Transverse colon (tissue), 4 donors: ENCODE measurements at regions of chr20 and their contacts with region 1.

Region 1: DNA sequence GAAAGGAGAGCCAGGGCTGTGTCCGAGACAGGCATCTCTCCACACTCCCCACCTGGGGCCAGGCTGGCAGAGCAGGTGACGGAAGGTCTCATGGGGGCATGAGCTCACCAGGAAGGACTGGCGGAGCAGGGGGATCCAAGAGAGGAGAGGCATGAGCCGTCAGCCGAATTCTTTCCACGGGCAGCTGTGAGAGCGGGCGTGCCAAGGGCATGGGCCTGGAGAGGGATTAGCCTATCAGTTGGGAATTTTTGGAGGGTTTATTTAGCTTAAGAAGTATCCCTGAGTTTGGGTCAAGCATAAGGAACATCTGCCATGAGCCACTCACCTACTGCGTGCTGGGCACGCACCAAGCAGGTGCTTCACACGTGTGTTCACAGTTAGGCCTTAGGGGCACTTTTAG is 60.2 kb upstream of the ZNFX1 start:
- DNase-seq: no peak
- H3K4me3 ChIP-seq: no peak overlapping the region
- H3K27ac ChIP-seq: no peak overlapping the region
- H3K4me1 ChIP-seq: no peaks in the 10 kb centered on the region
- H3K27me3 ChIP-seq: no peaks in the 10 kb centered on the region
- CTCF ChIP-seq: no peak
- EP300 ChIP-seq: no peak
- POLR2A ChIP-seq: no peak

Region 2: DNA sequence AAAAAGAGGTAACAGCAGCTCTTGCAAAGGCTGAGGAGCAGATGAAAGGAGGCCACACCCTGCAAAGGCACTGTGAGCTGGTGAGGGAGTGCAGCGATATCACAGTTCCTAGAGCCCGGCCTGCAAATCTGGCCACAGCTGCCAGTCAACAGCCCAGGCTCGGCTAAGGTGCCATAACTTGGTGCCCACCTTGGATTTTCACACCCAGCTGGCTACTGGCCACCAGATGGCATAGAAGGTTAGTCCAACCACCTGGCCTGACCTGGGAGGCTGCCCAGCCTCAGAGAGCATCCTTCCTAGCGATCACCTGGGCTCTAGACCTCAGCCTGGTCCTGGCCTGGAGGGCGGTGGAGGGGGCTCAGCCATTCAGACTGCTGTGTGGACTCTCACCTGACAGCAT is 97.6 kb after region 1 on chr20:
- in situ Hi-C with region 1: no loop called
- intact Hi-C with region 1: no loop called
- DNase-seq: no peak
- H3K4me3 ChIP-seq: no peak overlapping the region
- H3K27ac ChIP-seq: no peak overlapping the region
- H3K4me1 ChIP-seq: no peaks in the 10 kb centered on the region
- H3K27me3 ChIP-seq: peaks cover 16% of the 10 kb centered on the region
- CTCF ChIP-seq: no peak
- EP300 ChIP-seq: no peak
- POLR2A ChIP-seq: no peak

Region 3: DNA sequence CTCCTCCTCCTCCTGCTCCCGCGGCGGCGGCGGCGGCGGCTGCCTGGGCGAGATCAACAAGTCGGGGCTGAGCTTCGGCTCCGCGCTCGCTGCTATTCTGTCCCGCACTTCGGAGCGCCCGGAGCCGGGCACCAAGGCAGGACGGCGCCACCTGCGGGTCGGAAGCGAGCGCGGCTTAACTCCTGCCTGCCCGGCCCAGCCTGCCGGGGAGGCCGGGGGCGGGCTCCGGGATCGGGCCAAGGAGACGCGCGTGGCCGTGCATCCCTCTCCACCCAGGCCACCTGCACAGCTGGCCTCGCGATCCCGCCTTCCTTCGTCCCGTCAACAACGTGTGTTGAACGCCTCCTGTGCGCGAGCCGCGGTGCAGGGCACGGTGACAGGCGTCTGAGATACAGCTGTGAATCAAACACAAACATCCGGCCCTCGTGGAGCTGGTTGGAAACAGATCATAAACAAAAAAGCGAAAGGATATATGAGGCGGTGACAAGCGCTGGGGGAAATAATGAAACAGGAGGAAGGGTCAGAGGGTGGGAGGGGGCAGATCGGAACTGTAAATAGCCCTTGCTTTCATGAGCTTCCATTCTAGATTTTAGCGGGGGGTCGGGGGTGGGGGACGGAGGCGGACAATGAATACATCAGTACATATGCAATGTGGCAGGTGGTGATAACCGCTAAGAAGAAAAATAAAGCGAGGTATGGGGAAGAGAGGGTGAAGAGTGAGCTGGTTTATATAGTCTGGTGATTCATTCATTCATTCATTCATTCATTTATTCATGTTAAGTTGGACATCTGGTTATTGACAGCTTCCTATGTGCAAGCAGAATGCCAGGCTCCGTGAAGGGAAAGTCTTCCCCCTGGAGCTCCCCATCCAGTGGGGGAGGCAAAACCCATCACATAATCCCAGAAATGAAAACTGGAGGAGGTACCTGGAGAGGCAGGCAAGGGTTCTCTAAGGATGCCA is 146.4 kb after region 1 on chr20:
- in situ Hi-C with region 1: loop called in 2 of 4 experiments (anchors 10 kb)
- intact Hi-C with region 1: loop called (anchors 2 kb)
- DNase-seq: peak; percentile 76
- H3K4me3 ChIP-seq: peak overlapping the region; percentile 12 to 41 (median 24)
- H3K27ac ChIP-seq: peak overlapping the region in 3 of 4 donors; percentile 8 to 22 (median 10)
- H3K4me1 ChIP-seq: peaks cover 2 to 15% (median 11%) of the 10 kb centered on the region in 4 donors
- H3K27me3 ChIP-seq: peaks cover 64% of the 10 kb centered on the region
- CTCF ChIP-seq: peak; percentile 71 to 85 (median 75)
- EP300 ChIP-seq: no peak
- POLR2A ChIP-seq: no peak

Region 4: DNA sequence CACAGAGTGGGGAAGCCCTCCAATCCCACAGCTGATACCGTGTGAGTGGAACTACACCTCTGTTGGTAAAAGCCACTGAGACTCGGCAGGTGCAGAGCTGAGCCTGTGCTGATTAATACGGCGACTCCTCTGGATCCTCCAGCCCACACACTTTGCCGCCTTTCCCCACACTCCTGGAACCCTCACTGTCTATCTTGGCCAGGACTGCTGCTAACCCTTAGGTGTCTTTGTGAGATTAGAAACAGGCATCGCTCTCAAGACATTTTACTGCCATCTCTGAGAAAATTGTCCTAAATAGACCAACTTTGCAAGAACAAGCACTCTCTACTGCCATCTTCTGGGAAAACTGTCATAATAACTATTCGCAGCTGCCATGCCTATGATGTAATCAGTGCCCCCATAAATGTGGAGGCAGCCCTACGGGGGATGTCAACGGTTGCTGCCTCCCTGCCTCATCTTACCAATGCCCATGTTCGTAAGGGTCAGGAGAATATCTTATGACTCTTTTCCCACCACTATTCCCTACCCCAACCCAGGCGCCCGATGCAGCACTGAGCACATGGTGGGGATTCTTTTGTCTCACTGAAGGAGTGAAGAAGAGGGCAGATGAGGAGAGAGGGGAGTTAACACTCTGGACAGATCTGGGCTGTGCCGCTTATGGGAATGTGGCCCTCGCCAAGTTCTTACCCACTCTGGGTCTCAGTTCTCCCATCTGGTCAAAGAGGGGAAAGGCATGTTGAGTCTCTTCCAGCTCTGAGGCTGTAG is 170.6 kb after region 1 on chr20:
- in situ Hi-C with region 1: loop called in 3 of 4 experiments (anchors 10 kb)
- intact Hi-C with region 1: loop called (anchors 1 kb)
- DNase-seq: no peak
- H3K4me3 ChIP-seq: no peak overlapping the region
- H3K27ac ChIP-seq: peak overlapping the region in 3 of 4 donors; percentile 17 to 54 (median 18)
- H3K4me1 ChIP-seq: peaks cover 0 to 14% (median 6%) of the 10 kb centered on the region in 4 donors
- H3K27me3 ChIP-seq: peaks cover 8% of the 10 kb centered on the region
- CTCF ChIP-seq: peak; percentile 35 to 57 (median 48)
- EP300 ChIP-seq: no peak
- POLR2A ChIP-seq: no peak

Region 5: DNA sequence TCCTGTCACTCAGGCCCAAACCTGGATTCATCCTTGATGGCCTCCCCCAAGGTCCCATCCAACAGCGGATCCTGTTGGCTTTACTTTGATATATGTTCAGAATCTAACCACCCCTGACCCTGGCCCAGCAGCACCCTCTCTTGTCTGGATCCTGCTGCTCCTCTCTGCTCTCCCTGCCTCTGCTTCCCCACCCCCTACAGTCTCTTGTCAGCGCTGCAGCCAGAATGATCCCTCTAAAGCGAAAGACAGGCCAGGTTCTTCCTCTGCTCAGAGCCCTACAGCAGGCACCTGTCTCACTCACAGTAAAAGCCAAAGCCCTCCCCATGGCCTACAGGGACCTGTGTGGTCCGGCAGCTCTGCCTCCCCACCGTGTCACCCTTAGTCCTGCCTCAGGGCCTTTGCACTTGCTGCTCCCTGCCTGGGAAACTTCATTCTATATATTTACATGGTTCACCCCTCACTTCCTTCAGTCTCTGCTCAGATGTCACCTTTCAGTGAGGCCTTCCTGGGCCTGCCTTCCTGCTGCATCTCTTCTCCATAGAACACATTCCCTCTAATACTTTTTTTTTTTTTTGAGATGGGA is 181.8 kb after region 1 on chr20:
- in situ Hi-C with region 1: loop called in 3 of 4 experiments (anchors 10 kb)
- intact Hi-C with region 1: no loop called
- DNase-seq: no peak
- H3K4me3 ChIP-seq: no peak overlapping the region
- H3K27ac ChIP-seq: no peak overlapping the region
- H3K4me1 ChIP-seq: no peaks in the 10 kb centered on the region
- H3K27me3 ChIP-seq: no peaks in the 10 kb centered on the region
- CTCF ChIP-seq: no peak
- EP300 ChIP-seq: no peak
- POLR2A ChIP-seq: no peak